OCI-LY7 (cell line): ENCODE measurements at regions of chr12 and their contacts with region 1.

Region 1: GRCh38 chr12:6873094-6874014 is at the start of gene SPSB2:
- DNase-seq: peak; percentile 100
- H3K4me3 ChIP-seq: peak within 1 kb of the TSS; percentile 77
- H3K27ac ChIP-seq: peak within 1 kb of the TSS; percentile 68
- H3K4me1 ChIP-seq: peaks cover 47% of the 10 kb centered on the region
- CTCF ChIP-seq: no peak
- total RNA-seq, gene SPSB2: 7.8 and 8.3 TPM in 2 replicates

Region 2: DNA sequence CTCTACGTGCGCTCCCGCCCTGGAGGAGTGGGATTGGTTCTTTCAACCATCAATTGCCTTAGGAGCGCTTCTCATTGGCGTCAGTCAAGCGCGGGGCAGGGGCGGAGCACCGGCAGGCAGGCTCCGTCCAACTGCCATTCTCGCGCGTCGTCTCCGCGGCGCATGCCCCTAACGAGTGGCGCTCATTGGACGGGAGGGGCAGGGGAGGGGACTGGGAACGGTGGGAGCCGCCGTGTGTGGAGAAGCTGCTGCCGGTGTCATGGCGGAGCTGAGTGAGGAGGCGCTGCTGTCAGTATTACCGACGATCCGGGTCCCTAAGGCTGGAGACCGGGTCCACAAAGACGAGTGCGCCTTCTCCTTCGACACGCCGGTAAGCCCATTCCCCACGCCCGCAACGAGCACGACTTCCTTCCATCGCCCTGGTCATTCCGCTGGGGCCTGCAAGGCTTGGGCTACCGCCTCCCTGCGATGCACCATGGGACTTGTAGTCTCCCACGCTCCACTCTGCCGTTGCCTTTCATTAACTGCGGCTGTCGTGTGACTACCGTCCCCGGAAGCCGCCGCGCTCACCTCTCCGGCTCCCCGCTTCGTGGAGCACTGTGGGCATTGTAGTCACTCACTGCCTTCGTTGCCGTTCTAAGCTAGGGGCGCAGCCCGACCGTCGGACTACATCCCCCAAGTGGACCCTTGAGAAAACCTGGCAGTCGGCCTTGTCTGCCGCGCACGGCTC is 21.3 kb before region 1 on chr12 and contains the start of gene USP5:
- CTCF ChIA-PET with region 1: interaction called, 9 read pairs
- POLR2A ChIA-PET with region 1: interaction called, 60 read pairs
- intact Hi-C with region 1: loop called (anchors 1 kb)
- DNase-seq: peak; percentile 100
- H3K4me3 ChIP-seq: peak within 1 kb of the TSS; percentile 93
- H3K27ac ChIP-seq: peak within 1 kb of the TSS; percentile 86
- H3K4me1 ChIP-seq: peaks cover 35% of the 10 kb centered on the region
- CTCF ChIP-seq: no peak
- total RNA-seq, gene USP5: 65.9 and 70.4 TPM in 2 replicates

Region 3: DNA sequence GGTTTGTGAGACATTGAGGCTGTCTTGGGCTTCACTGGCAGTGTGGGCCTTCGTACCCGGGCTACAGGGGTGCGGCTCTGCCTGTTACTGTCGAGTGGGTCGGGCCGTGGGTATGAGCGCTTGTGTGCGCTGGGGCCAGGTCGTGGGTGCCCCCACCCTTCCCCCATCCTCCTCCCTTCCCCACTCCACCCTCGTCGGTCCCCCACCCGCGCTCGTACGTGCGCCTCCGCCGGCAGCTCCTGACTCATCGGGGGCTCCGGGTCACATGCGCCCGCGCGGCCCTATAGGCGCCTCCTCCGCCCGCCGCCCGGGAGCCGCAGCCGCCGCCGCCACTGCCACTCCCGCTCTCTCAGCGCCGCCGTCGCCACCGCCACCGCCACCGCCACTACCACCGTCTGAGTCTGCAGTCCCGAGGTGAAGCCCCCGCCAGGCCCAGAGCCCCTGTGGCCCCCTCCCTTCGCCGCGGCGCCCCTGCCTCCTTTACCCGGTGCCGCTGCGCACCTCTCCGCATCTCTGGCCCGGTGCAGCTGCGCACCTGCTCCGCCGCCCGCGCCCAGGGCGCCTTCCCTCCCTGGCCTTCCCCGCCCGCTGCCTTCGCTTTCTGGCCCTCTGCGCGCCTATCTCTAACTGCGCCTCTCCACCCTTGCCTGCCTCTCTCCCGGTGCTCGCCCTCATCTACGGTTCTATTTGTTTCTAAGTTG is 41.0 kb after region 1 on chr12 and contains the start of gene ENO2:
- CTCF ChIA-PET with region 1: no interaction called
- POLR2A ChIA-PET with region 1: interaction called, 4 read pairs
- intact Hi-C with region 1: loop called (anchors 2 kb)
- DNase-seq: peak; percentile 75
- H3K4me3 ChIP-seq: peak within 1 kb of the TSS; percentile 71
- H3K27ac ChIP-seq: peak within 1 kb of the TSS; percentile 4
- H3K4me1 ChIP-seq: peaks cover 34% of the 10 kb centered on the region
- CTCF ChIP-seq: no peak
- total RNA-seq, gene ENO2: 24.9 and 29.3 TPM in 2 replicates

Region 4: GRCh38 chr12:6965026-6965661 is 91.8 kb after region 1 on chr12:
- CTCF ChIA-PET with region 1: no interaction called
- POLR2A ChIA-PET with region 1: interaction called, 4 read pairs
- intact Hi-C with region 1: loop called (anchors 5 kb)
- DNase-seq: peak; percentile 86
- H3K4me3 ChIP-seq: no peak overlapping the region
- H3K27ac ChIP-seq: peak overlapping the region; percentile 64
- H3K4me1 ChIP-seq: peaks cover 69% of the 10 kb centered on the region
- CTCF ChIP-seq: peak; percentile 98

Region 5: DNA sequence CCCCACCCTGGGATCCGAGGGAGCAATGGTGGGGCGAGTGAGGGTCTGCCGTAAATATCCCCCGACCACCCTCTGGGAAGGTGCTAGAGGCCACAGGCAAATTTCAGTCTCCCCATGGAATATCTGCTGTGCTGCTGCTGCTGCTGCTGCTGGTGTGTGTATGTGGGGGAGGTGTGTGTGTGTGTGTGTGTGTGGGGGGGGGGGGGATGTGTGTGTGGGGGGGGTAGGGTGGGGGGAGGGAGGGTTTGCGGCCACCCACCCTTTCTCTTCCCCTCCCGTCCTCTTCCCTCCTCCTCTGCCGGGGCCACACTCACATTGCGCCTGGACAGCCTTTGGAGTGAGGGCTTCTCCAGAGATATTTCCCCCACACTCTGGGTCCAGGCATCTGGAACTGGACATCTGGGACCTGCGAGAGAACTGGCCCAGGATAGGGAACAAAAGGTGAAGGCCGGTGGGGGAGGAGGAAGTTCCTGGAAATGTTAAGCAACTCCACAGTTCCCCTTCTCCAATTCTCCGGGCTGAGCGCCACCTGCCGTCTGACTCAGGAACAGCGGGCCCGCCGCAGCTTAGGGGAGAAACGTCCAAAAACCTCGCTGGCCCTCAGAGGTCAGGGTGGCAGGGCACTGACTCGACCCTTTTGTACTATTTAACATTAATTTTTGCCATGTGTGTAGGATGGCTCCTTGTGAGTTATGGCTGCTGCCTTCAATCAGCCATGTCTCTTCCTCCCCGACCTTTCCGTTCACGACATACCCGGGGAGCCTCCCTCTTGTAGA is 235.6 kb after region 1 on chr12 and contains the start of gene C1RL:
- CTCF ChIA-PET with region 1: no interaction called
- POLR2A ChIA-PET with region 1: no interaction called
- intact Hi-C with region 1: loop called (anchors 5 kb)
- DNase-seq: peak; percentile 72
- H3K4me3 ChIP-seq: peak within 1 kb of the TSS; percentile 65
- H3K27ac ChIP-seq: no peak within 1 kb of the TSS
- H3K4me1 ChIP-seq: peaks cover 10% of the 10 kb centered on the region
- CTCF ChIP-seq: peak; percentile 91
- total RNA-seq, gene C1RL: 2.9 and 3.0 TPM in 2 replicates

Region 6: GRCh38 chr12:7667125-7667524 is 793.8 kb after region 1 on chr12:
- CTCF ChIA-PET with region 1: no interaction called
- POLR2A ChIA-PET with region 1: no interaction called
- intact Hi-C with region 1: no loop called
- DNase-seq: peak; percentile 42
- H3K4me3 ChIP-seq: no peak overlapping the region
- H3K27ac ChIP-seq: no peak overlapping the region
- H3K4me1 ChIP-seq: no peaks in the 10 kb centered on the region
- CTCF ChIP-seq: peak; percentile 73